Prostate gland (tissue), 2 donors: ENCODE measurements at regions of chr14 and their contacts with region 1.

Region 1: DNA sequence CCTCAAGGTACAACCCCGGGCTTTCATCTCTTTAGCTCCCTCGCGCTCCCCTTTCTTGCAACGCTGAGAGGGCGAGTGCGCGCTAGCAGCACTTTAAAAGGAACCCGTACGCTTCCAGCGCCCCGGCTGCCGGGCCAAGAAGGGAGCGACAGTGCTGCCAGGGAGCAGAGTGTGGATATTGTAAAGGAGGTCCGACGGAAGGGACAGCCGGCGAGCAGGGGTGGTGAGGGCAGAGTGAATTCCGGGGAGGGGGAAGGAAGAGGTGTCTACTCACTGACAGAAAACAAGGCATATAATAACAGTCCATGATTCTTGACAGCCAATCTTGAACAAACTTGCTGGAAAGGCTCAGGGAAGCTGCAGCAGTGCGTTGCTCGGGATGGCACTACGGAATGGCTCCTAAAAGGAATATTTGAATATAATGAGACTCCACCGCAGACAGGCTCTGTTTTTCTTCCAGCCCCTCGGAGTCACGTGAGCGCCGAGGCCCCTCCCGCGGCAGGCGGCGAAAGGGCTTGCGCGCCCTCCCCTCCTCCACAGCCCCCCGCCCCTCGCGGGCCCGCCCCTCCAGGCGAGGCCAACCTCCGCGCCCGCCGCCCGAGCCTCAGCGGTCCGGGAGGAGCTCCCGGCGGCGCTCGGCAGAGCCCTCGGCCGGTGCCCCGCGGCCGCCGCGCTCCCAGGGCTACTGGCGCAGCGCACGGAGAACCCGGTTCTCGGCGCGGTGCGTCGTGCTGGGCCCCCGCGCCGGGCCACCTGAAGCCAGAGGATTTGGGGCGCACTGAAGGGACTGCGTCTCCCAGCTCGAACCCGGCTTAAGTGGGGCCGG is 3.4 kb downstream of the BMP4 start:
- DNase-seq: peak; percentile 83
- H3K4me3 ChIP-seq: peak overlapping the region; percentile 50 to 56
- H3K27ac ChIP-seq: peak overlapping the region; percentile 85 to 87
- H3K4me1 ChIP-seq: no peaks in the 10 kb centered on the region
- H3K27me3 ChIP-seq: no peaks in the 10 kb centered on the region
- CTCF ChIP-seq: no peak
- POLR2A ChIP-seq: peak; percentile 89

Region 2: DNA sequence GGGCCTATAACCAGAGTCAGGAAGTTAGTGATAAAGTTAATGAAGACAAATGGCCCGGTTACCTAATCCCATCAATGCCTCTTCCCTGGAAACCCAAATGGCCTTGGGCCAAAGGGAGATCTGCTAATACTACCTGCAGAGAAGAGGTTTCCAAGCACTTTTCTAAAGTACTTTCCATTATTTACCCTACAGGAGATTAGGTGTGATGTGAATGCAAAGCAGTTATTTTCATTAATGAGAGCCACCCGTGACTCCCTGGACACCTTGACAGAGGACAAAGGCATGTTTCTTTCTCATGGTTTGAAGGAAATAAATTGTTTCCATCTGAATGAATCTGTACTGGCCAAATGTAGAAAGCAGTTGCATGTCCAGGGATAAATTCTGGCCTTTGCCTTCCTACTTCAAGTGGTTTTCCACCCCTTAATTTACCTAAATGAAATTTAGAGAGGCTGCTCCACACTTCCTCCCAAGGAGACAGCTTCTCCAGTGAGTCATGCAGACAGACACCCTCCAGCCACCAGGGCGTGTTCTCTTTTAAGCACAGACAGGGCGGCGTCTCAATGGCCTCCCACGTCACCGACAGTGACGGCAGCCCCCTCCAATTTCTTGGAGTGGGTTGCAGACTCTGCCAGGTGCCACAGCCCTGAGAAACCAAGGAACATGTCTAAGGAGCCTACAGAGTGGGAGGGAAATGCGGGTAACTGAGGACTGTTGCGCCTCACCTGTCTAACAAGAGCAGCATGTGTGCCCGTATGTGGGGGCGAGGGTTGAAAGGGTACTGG is 1117.9 kb before region 1 on chr14:
- intact Hi-C with region 1: no loop called
- DNase-seq: no peak
- H3K4me3 ChIP-seq: no peak overlapping the region
- H3K27ac ChIP-seq: no peak overlapping the region
- H3K4me1 ChIP-seq: no peaks in the 10 kb centered on the region
- H3K27me3 ChIP-seq: no peaks in the 10 kb centered on the region
- CTCF ChIP-seq: no peak
- POLR2A ChIP-seq: no peak

Region 3: DNA sequence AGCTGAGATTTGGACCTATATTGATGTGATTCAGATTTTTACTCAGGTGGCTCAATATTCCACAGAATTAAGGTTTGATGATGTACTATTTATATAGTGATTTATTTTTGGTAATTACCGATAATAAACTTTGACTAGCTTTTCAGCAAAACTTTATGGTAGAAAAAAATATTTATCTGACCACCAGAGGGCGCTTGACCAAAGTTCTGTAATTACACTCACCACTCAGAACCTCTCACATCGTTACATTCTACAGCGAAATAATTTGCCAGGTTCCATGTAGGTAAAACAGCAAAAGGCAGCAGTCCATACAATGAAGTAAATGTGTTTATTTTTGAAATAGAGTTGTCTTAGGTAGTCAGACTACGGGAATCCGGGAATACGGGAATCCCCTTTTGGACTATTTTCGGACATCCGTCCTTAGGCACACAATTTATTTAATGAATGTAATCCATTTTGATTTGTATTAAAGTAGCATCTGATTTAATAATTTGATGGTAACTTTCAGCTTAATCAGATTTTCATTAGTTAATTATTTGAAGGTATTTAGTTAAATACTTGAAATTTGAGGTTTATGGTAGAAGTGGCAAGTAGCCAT is 657.1 kb before region 1 on chr14:
- intact Hi-C with region 1: loop called (anchors 10 kb)
- DNase-seq: no peak
- H3K4me3 ChIP-seq: no peak overlapping the region
- H3K27ac ChIP-seq: no peak overlapping the region
- H3K4me1 ChIP-seq: no peaks in the 10 kb centered on the region
- H3K27me3 ChIP-seq: no peaks in the 10 kb centered on the region
- CTCF ChIP-seq: peak; percentile 47 to 85 (median 58)
- POLR2A ChIP-seq: no peak

Region 4: GRCh38 chr14:54002653-54003052 is 49.4 kb after region 1 on chr14:
- intact Hi-C with region 1: no loop called
- DNase-seq: no peak
- H3K4me3 ChIP-seq: no peak overlapping the region
- H3K27ac ChIP-seq: no peak overlapping the region
- H3K4me1 ChIP-seq: no peaks in the 10 kb centered on the region
- H3K27me3 ChIP-seq: no peaks in the 10 kb centered on the region
- CTCF ChIP-seq: no peak
- POLR2A ChIP-seq: no peak

Region 5: GRCh38 chr14:54175298-54175942 is 222.2 kb after region 1 on chr14:
- intact Hi-C with region 1: loop called (anchors 2 kb)
- DNase-seq: peak; percentile 59
- H3K4me3 ChIP-seq: no peak overlapping the region
- H3K27ac ChIP-seq: no peak overlapping the region
- H3K4me1 ChIP-seq: no peaks in the 10 kb centered on the region
- H3K27me3 ChIP-seq: no peaks in the 10 kb centered on the region
- CTCF ChIP-seq: peak; percentile 67 to 84 (median 81)
- POLR2A ChIP-seq: no peak

Region 6: DNA sequence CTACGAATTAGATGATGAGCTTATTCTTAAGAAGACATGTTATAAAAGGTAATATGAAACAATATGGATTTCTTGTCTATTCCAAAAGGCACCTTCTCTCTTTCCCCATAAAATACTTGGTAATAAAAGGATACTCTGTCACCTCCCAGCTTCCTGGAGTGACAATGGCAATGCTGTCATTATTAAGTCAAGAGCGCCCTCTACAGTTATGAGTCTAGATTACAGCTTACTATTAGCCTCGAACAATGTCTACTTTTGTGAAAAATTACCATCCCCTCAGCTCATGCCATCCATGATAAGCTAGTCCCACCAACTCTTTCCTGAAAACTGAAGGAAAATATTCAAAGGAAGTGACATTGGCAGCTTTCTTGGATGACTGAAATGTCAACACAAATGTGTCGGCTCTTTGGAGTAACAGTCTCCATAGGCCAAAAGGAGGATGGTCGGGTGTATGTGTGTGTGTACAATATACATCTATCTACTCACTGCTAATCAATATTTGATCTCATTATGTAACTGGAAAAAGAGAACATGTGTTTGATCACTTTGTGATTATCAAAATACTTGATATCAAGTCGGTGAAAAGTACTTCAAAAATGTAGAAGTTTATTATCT is 394.9 kb after region 1 on chr14:
- intact Hi-C with region 1: loop called (anchors 5 kb)
- DNase-seq: peak; percentile 43
- H3K4me3 ChIP-seq: no peak overlapping the region
- H3K27ac ChIP-seq: no peak overlapping the region
- H3K4me1 ChIP-seq: peaks cover 1% of the 10 kb centered on the region
- H3K27me3 ChIP-seq: no peaks in the 10 kb centered on the region
- CTCF ChIP-seq: peak in 3 of 4 experiments; percentile 72 to 81 (median 79)
- POLR2A ChIP-seq: no peak